Pancreas (tissue), 10 donors: ENCODE measurements at regions of chr6 and their contacts with region 1.

Region 1: DNA sequence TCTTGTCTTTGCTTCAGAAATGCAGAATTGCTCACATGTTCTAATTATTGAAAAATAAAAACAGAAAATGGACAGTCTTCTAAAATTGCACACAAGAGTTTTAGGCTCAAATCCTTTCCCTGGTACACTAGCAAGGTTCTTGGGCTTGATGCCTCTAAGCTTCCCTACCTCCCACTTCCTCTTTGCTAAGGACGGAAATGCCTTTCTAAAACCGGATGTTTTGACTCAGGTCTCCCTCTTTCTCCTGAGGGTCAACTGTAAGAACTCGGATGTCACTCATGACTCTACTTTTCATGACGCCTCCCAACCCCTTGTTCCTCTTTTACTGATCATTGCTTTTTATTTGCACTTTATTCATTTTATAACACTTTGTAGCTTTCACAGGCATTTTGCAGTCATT is 613.5 kb downstream of the C6orf118 start:
- DNase-seq: no peak
- ATAC-seq: no peak
- H3K4me3 ChIP-seq: no peak overlapping the region
- H3K27ac ChIP-seq: no peak overlapping the region
- H3K4me1 ChIP-seq: no peaks in the 10 kb centered on the region
- H3K27me3 ChIP-seq: no peaks in the 10 kb centered on the region
- CTCF ChIP-seq: no peak

Region 2: GRCh38 chr6:163962627-163963117 is 733.2 kb before region 1 on chr6:
- intact Hi-C with region 1: loop called in 1 of 3 experiments (anchors 5 kb)
- DNase-seq: no peak
- ATAC-seq: no peak
- H3K4me3 ChIP-seq: no peak overlapping the region
- H3K27ac ChIP-seq: no peak overlapping the region
- H3K4me1 ChIP-seq: no peaks in the 10 kb centered on the region
- H3K27me3 ChIP-seq: no peaks in the 10 kb centered on the region
- CTCF ChIP-seq: no peak